Heart right ventricle (tissue), 16 donors: ENCODE measurements at regions of chr5 and their contacts with region 1.

Region 1: DNA sequence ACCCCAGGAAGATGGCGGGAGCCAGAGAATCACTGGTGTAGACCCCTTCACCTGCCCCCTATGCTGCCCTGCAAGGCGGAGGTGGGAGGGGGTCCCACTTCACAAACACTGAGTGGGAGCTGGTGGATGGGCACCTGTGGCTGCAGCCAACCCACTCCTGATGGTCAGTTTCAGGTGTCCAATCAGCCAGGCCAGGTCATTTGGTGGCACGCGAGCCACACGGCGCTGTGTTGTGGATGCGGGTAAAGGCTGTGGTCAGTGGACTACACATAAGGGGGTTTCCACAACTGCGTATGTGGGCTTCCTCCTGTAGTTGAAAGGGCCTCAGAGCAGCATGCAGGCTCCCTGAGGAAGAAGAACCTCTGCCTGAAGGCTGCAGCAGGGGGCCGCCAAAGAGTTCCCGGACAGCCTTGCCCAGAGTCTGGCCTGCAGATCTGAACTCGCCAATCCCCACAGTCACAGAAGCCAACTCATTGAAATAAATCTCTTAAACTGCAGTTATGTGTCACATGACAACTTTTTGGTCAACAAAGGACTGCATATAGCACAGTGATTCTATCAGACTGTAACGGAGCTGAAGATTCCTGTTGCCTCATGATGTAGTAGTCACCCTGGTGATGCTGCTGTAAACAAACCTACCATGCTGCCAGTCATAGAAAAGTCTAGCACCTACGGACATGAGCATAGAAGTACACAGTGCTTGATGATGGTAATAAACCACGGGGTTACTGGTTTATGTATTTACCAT is 284.7 kb upstream of the IRX2 start:
- DNase-seq: no peak
- ATAC-seq: no peak
- H3K4me3 ChIP-seq: no peak overlapping the region
- H3K27ac ChIP-seq: no peak overlapping the region
- H3K4me1 ChIP-seq: no peaks in the 10 kb centered on the region
- H3K27me3 ChIP-seq: no peaks in the 10 kb centered on the region
- CTCF ChIP-seq: no peak

Region 2: GRCh38 chr5:2482778-2483177 is 553.4 kb before region 1 on chr5:
- intact Hi-C with region 1: loop called in 1 of 10 experiments (anchors 5 kb)
- DNase-seq: no peak
- ATAC-seq: no peak
- H3K4me3 ChIP-seq: no peak overlapping the region
- H3K27ac ChIP-seq: no peak overlapping the region
- H3K4me1 ChIP-seq: no peaks in the 10 kb centered on the region
- H3K27me3 ChIP-seq: no peaks in the 10 kb centered on the region
- CTCF ChIP-seq: no peak

Region 3: GRCh38 chr5:2732846-2733245 is 303.4 kb before region 1 on chr5:
- intact Hi-C with region 1: no loop called
- DNase-seq: no peak
- ATAC-seq: no peak
- H3K4me3 ChIP-seq: no peak overlapping the region
- H3K27ac ChIP-seq: no peak overlapping the region
- H3K4me1 ChIP-seq: no peaks in the 10 kb centered on the region
- H3K27me3 ChIP-seq: peaks cover 0 to 76% (median 55%) of the 10 kb centered on the region in 7 donors
- CTCF ChIP-seq: no peak